ENCODE measurements at regions of chr19 and their contacts with region 1.

Region 1: GRCh38 chr19:58009666-58010371 is 7.2 kb upstream of the ZNF606 start:
- DNase-seq: no peak
- ATAC-seq: no peak
- H3K4me3 ChIP-seq: no peak overlapping the region
- H3K27ac ChIP-seq: no peak overlapping the region
- H3K4me1 ChIP-seq: no peaks in the 10 kb centered on the region
- H3K27me3 ChIP-seq: no peaks in the 10 kb centered on the region
- CTCF ChIP-seq: no peak

Region 2: DNA sequence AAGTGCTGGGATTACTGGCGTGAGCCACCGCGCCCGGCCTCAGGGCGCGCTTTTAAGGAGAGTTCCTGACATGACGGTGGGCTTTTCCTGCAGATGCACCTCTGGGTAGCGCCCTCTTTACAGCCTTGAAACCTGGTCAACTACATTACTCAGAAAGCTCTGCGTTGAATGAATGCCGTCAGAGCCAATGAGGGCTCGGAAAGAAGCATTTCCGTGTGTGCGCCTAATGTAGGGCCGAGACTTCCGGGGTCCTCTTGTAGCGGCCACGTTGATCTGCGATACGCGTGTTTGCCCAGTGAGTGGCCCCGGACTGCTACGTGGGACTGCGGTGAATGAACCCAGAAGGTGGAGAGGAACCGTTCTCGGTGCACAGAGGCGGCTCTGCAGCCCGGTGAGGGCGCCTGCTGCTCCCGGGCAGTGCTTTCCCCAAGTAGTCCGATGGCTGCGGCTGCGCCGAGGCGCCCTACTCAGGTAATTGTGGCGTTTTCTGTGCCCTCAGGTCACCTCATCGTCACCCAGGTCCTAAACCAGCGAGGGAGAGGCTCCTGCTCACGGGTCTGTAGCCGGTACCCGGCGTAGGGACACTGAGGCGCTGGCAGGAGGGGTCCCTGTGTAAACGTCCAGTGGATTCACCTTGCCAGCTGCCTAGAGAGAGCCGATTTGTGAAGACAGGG is 190.2 kb before region 1 on chr19:
- CTCF ChIA-PET with region 1: no interaction called
- POLR2A ChIA-PET with region 1: no interaction called
- in situ Hi-C with region 1: no loop called
- intact Hi-C with region 1: loop called (anchors 5 kb)
- DNase-seq: peak; percentile 86
- ATAC-seq: peak; percentile 93
- H3K4me3 ChIP-seq: peak overlapping the region; percentile 75 to 92
- H3K27ac ChIP-seq: peak overlapping the region; percentile 92
- H3K4me1 ChIP-seq: peaks cover 10% of the 10 kb centered on the region
- H3K27me3 ChIP-seq: no peaks in the 10 kb centered on the region
- CTCF ChIP-seq: no peak; the same call in 1 of the 2 replicates

Region 3: GRCh38 chr19:58021541-58022282 is 11.9 kb after region 1 on chr19:
- CTCF ChIA-PET with region 1: no interaction called
- POLR2A ChIA-PET with region 1: interaction called, 12 read pairs
- in situ Hi-C with region 1: no loop called
- intact Hi-C with region 1: no loop called
- DNase-seq: no peak
- ATAC-seq: peak; percentile 62
- H3K4me3 ChIP-seq: no peak overlapping the region
- H3K27ac ChIP-seq: no peak overlapping the region
- H3K4me1 ChIP-seq: no peaks in the 10 kb centered on the region
- H3K27me3 ChIP-seq: no peaks in the 10 kb centered on the region
- CTCF ChIP-seq: no peak